A673 (cell line): ENCODE measurements at regions of chr6 and their contacts with region 1.

Region 1: GRCh38 chr6:73129653-73130443 is 95.4 kb downstream of the KHDC1L start:
- DNase-seq: peak; percentile 93
- H3K4me3 ChIP-seq: no peak overlapping the region
- H3K27ac ChIP-seq: no peak overlapping the region
- H3K4me1 ChIP-seq: peaks cover 25% of the 10 kb centered on the region
- H3K27me3 ChIP-seq: no peaks in the 10 kb centered on the region
- CTCF ChIP-seq: peak; percentile 99

Region 2: DNA sequence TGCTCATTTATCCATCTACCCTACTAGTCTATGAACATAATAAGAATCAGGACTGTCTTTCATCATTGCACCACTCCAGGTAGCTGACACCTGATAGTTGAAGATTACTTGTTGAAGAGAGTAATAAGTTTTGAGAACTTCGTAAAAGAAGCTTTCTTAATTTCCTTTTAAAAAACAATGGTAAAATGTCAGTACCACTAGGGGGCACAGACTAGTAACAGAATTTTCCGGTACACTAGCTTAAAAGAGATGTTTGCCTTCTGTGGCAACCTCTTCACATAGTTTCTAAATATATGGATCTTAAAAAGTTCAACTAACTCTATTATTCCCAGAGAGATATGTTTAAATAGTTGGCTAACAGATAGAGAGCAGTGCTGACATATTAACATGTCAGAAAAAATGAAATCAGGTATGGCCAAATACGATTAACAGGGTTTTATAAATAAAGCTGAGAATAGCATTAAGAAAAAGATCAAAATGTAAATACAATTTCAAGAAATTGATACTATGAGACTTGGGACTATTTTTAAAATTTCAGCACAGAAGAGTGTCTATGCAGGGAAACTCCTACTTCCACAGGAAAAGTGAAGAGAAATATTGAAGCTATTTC is 513.3 kb before region 1 on chr6:
- CTCF ChIA-PET with region 1: interaction called, 19 read pairs
- POLR2A ChIA-PET with region 1: no interaction called
- intact Hi-C with region 1: no loop called
- DNase-seq: peak; percentile 58
- H3K4me3 ChIP-seq: no peak overlapping the region
- H3K27ac ChIP-seq: no peak overlapping the region
- H3K4me1 ChIP-seq: peaks cover 24% of the 10 kb centered on the region
- H3K27me3 ChIP-seq: no peaks in the 10 kb centered on the region
- CTCF ChIP-seq: peak; percentile 78

Region 3: GRCh38 chr6:72643214-72643613 is 486.6 kb before region 1 on chr6:
- CTCF ChIA-PET with region 1: no interaction called
- POLR2A ChIA-PET with region 1: no interaction called
- intact Hi-C with region 1: loop called (anchors 1 kb)
- DNase-seq: peak; percentile 65
- H3K4me3 ChIP-seq: no peak overlapping the region
- H3K27ac ChIP-seq: no peak overlapping the region
- H3K4me1 ChIP-seq: peaks cover 31% of the 10 kb centered on the region
- H3K27me3 ChIP-seq: no peaks in the 10 kb centered on the region
- CTCF ChIP-seq: peak; percentile 51

Region 4: GRCh38 chr6:73050706-73051105 is 79.1 kb before region 1 on chr6:
- CTCF ChIA-PET with region 1: no interaction called
- POLR2A ChIA-PET with region 1: no interaction called
- intact Hi-C with region 1: loop called (anchors 2 kb)
- DNase-seq: peak; percentile 60
- H3K4me3 ChIP-seq: no peak overlapping the region
- H3K27ac ChIP-seq: peak overlapping the region; percentile 77
- H3K4me1 ChIP-seq: peaks cover 33% of the 10 kb centered on the region
- H3K27me3 ChIP-seq: no peaks in the 10 kb centered on the region
- CTCF ChIP-seq: no peak

Region 5: DNA sequence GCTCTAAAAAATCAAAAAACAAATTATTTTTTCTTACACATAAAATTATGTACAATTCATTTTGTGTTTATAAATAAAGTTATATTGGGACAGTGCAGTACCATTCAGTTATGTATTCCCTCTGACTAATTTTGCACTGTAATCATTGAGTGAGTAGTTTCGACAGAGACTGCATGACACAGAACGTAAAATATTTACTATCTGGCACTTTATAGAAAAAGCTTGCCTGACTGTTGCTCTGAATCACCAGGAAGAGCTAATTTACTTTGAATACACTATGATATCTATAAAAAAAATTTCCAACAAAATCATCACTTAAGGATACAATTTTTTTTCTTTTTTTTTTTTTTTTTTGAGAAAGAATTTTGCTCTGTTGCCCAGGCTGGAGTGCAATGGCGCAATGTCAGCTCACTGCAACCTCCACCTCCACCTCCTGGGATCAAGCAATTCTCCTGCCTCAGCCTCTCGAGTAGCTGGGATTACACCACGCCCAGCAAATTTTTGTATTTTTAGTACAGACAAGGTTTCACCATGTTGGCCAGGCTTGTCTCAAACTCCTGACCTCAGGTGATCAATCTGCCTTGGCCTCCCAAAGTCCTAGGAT is 106.4 kb after region 1 on chr6:
- CTCF ChIA-PET with region 1: no interaction called
- POLR2A ChIA-PET with region 1: no interaction called
- intact Hi-C with region 1: no loop called
- DNase-seq: peak; percentile 10
- H3K4me3 ChIP-seq: no peak overlapping the region
- H3K27ac ChIP-seq: no peak overlapping the region
- H3K4me1 ChIP-seq: no peaks in the 10 kb centered on the region
- H3K27me3 ChIP-seq: no peaks in the 10 kb centered on the region
- CTCF ChIP-seq: no peak